ENCODE measurements at regions of chr9 and their contacts with region 1.

Region 1: GRCh38 chr9:128829477-128830251 is at the start of gene SPOUT1:
- DNase-seq: peak; percentile 97
- H3K4me3 ChIP-seq: peak within 1 kb of the TSS; percentile 63
- H3K27ac ChIP-seq: peak within 1 kb of the TSS; percentile 82
- H3K4me1 ChIP-seq: peaks cover 7% of the 10 kb centered on the region
- H3K27me3 ChIP-seq: no peaks in the 10 kb centered on the region
- CTCF ChIP-seq: no peak
- total RNA-seq, gene SPOUT1: 66.4 and 67.6 TPM in 2 replicates

Region 2: DNA sequence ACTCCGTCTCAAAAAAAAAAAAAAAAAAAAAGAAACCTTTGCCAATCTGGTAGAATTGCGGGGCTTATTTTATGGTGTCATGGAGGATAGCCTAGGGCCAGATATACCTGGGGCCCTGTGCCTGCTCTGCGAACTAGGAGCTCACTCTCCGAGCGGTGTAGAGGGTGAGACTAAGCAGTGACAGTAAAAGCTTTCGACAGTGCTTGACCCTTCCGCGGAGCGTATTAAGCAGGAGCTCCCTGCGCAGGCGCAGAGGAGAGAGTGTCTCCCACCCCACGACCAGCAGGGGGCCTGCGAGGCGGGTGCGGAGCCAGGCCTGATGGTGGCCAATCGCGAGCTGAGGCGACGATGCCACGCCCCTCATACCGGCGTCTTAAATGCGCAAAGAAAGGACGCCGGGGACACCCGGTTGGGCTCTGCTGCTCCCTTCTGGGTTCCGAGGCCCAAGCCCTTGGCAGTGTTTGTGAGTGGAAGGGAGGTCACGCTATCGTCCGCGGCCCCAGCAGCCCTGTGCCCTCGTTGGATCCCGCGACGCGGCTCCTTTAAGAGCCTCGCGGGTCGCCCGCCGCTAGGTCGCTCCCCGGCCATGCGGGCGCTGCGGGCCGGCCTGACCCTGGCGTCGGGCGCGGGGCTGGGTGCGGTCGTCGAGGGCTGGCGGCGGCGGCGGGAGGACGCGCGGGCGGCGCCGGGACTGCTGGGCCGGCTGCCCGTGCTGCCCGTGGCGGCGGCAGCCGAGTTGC is 11.4 kb before region 1 on chr9 and contains the start of gene ENDOG:
- CTCF ChIA-PET with region 1: interaction called, 10 read pairs
- POLR2A ChIA-PET with region 1: interaction called, 3 read pairs
- intact Hi-C with region 1: no loop called
- DNase-seq: peak; percentile 99
- H3K4me3 ChIP-seq: peak within 1 kb of the TSS; percentile 73
- H3K27ac ChIP-seq: peak within 1 kb of the TSS; percentile 87
- H3K4me1 ChIP-seq: peaks cover 7% of the 10 kb centered on the region
- H3K27me3 ChIP-seq: no peaks in the 10 kb centered on the region
- CTCF ChIP-seq: peak; percentile 70
- total RNA-seq, gene ENDOG: 45.8 and 46.7 TPM in 2 replicates

Region 3: DNA sequence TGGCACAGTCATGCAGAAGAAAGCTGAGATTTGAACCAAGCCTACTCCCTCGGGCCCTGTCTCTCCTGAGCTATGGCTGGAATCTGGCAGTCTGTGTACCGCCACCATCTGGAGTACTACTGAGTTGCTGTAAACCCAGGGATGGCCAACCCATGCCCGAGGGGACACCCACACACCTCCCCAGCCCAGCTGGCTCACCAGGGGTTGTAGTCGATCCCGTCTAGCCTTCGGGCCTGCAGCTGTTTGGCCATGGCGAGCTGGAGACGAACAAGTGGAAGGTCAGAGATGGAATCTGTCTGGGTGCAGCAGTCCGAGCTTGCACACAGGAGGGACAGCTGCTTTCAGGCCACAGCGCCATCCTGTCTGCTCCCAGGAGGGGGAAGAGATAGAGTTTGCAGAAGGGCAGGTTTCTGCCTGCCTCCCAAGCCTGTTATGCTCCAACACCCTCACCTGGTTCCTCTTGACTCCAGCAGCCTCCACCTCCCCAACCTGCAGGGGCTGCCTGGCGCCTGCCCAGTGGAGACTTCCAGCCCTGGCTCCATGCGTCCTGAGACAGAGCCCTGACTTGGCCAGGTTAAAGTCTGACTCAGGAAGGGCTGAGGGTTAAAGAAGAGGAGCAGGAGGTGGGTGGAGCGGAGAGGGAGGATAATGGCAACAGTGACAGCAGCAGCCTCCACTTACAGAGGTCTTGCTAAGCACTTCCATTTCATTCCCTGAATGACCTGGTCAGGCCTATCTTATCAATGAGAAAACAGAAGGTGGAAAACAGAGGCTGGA is 15.7 kb after region 1 on chr9:
- CTCF ChIA-PET with region 1: interaction called, 12 read pairs
- POLR2A ChIA-PET with region 1: no interaction called
- intact Hi-C with region 1: no loop called
- DNase-seq: no peak
- H3K4me3 ChIP-seq: no peak overlapping the region
- H3K27ac ChIP-seq: no peak overlapping the region
- H3K4me1 ChIP-seq: no peaks in the 10 kb centered on the region
- H3K27me3 ChIP-seq: no peaks in the 10 kb centered on the region
- CTCF ChIP-seq: 0 out of 2 replicates have a peak, but pooled peaks have one; percentile 24

Region 4: DNA sequence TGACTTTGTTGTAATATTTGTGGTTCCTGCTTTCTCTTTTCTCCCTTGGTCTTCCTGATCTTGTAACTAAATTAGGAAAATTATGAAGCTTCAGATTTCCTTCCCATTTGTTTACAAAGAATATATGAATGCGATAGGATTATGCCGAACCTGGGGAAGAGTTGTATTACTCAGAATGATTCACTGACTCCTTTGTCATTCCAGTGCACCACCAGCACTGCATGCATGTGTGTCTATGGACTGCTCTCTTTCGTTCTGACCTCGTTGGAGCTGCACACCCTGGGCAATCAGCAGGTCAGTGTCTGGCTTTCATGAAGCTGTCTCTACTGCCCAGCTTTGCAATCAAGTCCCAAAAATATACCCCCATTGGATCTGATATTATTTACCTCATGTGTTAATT is 143.3 kb after region 1 on chr9:
- CTCF ChIA-PET with region 1: interaction called, 11 read pairs
- POLR2A ChIA-PET with region 1: no interaction called
- intact Hi-C with region 1: no loop called
- DNase-seq: no peak
- H3K4me3 ChIP-seq: no peak overlapping the region
- H3K27ac ChIP-seq: no peak overlapping the region
- H3K4me1 ChIP-seq: no peaks in the 10 kb centered on the region
- H3K27me3 ChIP-seq: no peaks in the 10 kb centered on the region
- CTCF ChIP-seq: no peak

Measured in A673 (cell line).